ENCODE measurements at regions of chr19 and their contacts with region 1.

Region 1: DNA sequence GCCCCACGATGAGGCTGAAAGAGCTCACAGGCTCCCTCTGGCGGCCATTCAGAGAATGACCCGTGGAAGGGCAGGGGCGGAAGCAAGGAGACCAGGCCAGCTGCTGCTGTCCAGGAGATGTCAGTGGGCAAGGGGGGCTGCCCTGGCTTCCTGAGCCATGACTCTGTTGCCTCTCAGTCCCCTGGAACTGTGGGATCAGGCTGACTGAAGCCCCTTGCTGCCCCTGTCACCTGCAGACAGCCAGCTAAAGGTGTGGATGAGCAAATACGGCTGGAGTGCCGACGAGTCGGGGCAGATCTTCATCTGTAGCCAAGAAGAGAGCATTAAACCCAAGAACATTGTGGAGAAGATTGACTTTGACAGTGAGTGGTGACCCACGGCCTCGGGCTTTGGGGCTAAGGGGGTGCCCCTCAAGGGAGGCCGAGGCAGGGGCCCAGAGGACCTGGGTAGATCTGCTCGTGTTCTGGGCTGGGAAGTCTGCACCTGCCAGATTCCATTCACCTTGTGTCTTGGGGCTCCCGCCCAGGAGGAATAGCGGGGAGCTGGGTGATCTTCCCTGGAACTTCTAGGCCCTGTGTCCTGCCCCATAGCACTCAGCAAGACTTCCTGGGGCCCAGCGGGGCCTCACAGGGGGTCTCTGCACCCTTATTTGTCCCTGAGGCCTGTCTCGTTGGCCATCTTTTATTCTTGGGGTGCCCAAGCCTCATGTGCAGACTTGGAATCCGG is 12.5 kb upstream of the ACTN4 start:
- DNase-seq: no peak
- H3K4me3 ChIP-seq: no peak overlapping the region
- H3K27ac ChIP-seq: no peak overlapping the region
- H3K4me1 ChIP-seq: peaks cover 35% of the 10 kb centered on the region
- H3K27me3 ChIP-seq: no peaks in the 10 kb centered on the region
- CTCF ChIP-seq: peak; percentile 89 to 93

Region 2: DNA sequence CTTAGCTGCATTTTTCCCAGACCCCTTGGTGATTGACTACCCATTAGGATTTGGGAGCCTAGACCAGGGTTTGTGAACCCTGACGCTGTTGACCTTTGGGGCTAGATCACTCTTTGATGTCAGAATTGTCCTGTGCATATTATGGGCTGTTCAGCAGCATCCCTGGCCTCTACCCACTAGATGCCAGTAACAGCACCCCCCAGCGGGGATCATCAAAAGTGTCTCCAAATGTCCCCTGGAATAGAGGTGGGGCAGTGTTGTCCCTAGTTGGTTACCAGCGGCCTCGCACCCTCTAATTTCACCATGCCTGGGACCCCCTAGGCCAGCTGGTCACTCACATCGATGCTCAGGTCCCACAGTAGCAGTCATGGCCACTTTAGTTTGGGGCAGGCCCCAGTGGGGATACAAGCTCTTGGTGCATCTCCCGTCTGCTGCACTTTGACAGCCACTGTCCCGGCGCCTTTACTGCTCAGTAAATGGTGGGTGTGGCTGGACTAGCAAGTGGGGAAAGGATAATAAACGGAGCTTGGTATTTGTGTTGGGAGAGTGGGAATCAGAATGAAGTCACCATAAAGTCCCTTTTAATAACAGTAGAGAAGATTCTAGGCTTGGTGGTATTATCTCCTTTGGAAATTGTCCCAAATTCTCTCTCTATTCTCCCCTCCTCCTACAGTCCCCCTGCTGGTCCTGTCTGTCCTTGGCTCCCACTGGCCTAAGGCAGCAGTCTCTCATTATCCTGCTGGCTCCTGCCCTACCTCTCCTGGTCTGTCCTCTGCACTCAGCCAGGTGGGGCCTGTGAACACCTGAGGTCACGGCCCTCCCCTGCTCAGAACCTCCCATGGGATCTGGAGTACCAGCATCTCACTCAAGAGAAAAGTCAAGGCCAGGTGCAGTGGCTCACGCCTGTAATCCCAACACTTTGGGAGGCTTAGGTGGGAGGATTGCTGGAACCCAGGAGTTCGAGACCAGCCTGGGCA is 647.3 kb before region 1 on chr19:
- CTCF ChIA-PET with region 1: no interaction called
- dilution Hi-C with region 1: no loop called
- in situ Hi-C with region 1: no loop called
- intact Hi-C with region 1: no loop called
- DNase-seq: no peak
- H3K4me3 ChIP-seq: no peak overlapping the region
- H3K27ac ChIP-seq: no peak overlapping the region
- H3K4me1 ChIP-seq: peaks cover 60% of the 10 kb centered on the region
- H3K27me3 ChIP-seq: no peaks in the 10 kb centered on the region
- CTCF ChIP-seq: peak; percentile 19 to 36

Region 3: DNA sequence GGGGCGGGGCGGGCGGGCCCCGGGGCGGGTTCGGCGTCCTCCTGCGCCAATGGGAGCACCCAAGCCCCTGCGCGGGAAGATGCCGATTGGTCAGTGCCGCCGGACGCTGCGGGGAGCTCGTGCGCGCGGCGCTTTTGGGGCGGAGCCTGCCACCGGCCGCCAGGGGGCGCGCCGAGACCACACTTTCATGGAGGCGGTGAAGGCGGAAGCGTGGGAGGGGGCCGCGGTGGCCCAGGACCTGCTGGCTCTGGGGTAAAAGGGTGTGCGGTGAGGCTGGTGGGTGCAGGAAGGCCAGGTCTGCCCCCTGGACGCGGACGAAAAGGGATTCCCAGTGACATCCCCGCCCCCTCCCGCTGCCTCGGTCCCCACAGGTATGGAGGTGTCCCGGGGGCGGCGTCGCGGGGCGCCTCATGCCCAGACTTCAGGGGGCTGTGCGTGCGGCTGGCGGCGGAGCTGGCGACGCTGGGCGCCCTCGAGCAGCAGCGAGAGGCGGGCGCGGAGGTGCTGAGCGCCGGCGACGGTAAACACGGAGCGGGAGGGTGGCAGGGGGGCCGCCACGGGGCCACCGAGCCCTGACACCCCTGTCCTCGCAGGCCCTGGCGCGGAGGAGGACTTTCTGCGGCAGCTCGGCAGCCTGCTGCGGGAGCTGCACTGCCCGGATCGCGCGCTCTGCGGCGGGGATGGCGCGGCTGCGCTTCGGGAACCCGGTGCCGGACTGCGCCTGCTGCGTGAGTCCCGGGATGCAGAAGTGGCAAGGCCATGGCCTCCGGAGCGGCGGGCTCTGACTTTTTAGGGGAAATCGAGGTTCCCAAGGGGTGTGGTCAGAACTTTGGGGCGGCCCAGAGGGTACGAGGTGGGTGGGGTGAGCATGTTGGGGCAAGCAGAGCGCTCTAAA is 231.7 kb before region 1 on chr19 and contains the start of gene FAM98C:
- CTCF ChIA-PET with region 1: interaction called, 9 read pairs
- dilution Hi-C with region 1: no loop called
- in situ Hi-C with region 1: no loop called
- intact Hi-C with region 1: loop called (anchors 1 kb)
- DNase-seq: peak; percentile 94
- H3K4me3 ChIP-seq: peak within 1 kb of the TSS; percentile 58 to 94 (median 83)
- H3K27ac ChIP-seq: no peak within 1 kb of the TSS
- H3K4me1 ChIP-seq: no peaks in the 10 kb centered on the region
- H3K27me3 ChIP-seq: no peaks in the 10 kb centered on the region
- CTCF ChIP-seq: peak; percentile 76 to 93
- total RNA-seq, gene FAM98C: 10.5 to 14.9 TPM

Region 4: DNA sequence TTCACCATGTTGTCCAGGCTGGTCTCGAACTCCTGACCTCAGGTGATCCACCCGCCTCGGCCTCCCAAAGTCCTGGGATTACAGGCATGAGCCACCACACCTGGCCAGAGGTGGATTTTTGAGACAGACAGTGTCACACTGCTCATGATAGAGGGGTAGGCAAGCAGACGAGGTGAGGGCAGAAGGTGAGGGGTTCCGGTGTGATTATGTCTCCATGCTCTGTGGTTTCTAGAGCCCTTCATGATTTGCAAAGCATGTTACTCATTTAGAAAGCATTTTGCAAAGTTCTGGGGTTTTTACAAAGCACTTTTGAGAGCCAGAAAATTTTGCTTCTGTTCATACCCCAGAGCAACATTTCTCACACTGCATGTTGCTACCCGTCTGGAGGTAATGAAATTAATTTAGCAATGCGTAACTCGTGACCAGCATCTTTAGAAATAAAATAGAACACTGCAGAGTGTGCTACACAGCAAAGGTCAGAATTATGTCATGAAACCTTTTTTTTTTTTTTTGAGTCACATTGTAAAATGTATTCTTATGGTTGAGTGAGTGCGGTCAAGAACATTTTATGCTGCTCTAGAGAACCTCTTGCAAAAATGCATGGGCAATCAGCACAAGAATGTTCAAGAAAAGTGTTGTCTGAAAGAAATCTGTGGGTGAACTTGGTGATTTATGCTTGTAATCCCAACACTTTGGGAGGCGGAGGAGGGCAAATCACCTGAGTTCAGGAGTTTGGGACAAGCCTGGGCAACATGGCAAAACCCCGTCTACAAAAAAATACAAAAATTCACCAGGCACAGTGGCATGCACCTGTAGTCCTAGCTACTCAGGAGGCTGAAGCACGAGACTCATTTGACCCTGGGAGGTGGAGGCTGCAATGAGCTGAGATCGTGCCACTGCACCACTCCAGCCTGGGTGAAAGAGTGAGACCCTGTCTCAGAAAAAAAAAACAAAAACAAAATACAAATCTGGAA is 75.2 kb before region 1 on chr19:
- CTCF ChIA-PET with region 1: interaction called, 3 read pairs
- dilution Hi-C with region 1: no loop called
- in situ Hi-C with region 1: no loop called
- intact Hi-C with region 1: loop called (anchors 1 kb)
- DNase-seq: peak; percentile 99
- H3K4me3 ChIP-seq: no peak overlapping the region
- H3K27ac ChIP-seq: peak overlapping the region; percentile 48
- H3K4me1 ChIP-seq: peaks cover 19% of the 10 kb centered on the region
- H3K27me3 ChIP-seq: peaks cover under 1% of the 10 kb centered on the region
- CTCF ChIP-seq: no peak

Region 5: DNA sequence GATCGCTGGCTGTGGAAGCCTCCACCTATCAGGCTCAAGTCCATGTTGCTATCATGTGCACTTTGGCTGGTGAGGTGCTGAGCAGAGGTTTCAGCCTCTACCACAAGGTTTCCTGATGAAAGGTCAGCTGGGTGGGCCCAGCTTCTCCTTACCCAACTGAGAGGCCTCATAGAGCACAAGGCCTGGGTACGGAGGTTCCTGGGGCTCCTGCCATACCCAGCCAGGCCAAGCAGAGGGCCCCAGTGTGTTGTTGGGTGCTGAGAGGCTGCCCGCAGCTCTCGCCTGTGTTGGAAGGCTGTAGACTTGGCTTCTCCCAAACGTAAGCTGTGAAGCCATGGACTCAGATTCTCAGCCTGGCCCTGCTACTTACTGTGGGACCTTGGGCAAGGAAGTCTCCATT is 40.7 kb after region 1 on chr19:
- CTCF ChIA-PET with region 1: no interaction called
- dilution Hi-C with region 1: no loop called
- in situ Hi-C with region 1: no loop called
- intact Hi-C with region 1: loop called (anchors 1 kb)
- DNase-seq: no peak
- H3K4me3 ChIP-seq: no peak overlapping the region
- H3K27ac ChIP-seq: peak overlapping the region; percentile 99
- H3K4me1 ChIP-seq: peaks cover 74% of the 10 kb centered on the region
- H3K27me3 ChIP-seq: no peaks in the 10 kb centered on the region
- CTCF ChIP-seq: no peak

Region 6: GRCh38 chr19:38718747-38719543 is 84.0 kb after region 1 on chr19:
- CTCF ChIA-PET with region 1: interaction called, 3 read pairs
- dilution Hi-C with region 1: no loop called
- in situ Hi-C with region 1: no loop called
- intact Hi-C with region 1: loop called (anchors 2 kb)
- DNase-seq: peak; percentile 68
- H3K4me3 ChIP-seq: no peak overlapping the region
- H3K27ac ChIP-seq: peak overlapping the region; percentile 86
- H3K4me1 ChIP-seq: peaks cover 43% of the 10 kb centered on the region
- H3K27me3 ChIP-seq: no peaks in the 10 kb centered on the region
- CTCF ChIP-seq: peak; percentile 27 to 61

Region 7: DNA sequence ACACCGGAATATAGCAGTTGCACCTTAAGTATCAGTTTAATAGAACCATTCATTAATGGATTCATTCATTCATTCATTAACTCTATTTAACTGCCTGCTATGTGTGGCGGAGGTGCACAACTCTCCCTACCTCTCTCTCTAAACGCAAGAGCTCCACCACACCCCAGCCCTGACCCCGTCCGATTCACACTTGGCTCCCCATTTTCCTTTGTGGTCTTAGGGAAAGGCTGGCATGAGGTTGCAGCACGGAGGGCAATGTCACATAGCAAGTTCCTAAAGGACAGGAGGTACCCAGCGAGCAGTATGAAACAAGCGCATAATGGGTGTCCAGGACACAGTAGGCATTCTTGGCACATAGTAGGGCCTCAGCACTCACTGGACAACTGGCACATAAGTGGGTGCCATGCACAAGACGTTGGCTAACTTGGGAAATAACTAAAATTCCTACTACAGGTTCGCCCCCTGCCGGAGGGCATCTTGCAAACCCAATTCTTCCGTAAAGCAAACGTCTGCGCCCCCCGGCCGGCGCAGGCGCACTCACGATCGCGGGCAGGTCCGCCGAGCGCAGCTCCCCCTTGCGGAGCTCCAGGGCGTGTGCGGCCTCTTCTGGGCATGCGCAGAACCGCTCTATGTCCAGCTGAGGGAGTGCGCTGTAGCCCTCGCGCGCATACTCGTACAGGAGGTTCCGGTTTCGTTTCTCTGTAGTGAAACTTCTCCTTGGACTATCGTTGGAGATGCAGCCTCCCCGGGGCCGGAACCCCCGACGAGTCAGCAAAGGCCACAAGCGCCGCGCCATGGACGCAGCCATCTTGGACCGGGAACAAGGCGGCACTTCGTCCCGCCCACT is 295.2 kb after region 1 on chr19 and contains the start of gene SARS2:
- CTCF ChIA-PET with region 1: interaction called, 3 read pairs
- dilution Hi-C with region 1: no loop called
- in situ Hi-C with region 1: no loop called
- intact Hi-C with region 1: loop called (anchors 1 kb)
- DNase-seq: peak; percentile 84
- H3K4me3 ChIP-seq: peak within 1 kb of the TSS; percentile 84 to 90 (median 86)
- H3K27ac ChIP-seq: peak within 1 kb of the TSS; percentile 82
- H3K4me1 ChIP-seq: peaks cover 12% of the 10 kb centered on the region
- H3K27me3 ChIP-seq: no peaks in the 10 kb centered on the region
- CTCF ChIP-seq: peak; percentile 88 to 96
- total RNA-seq, gene SARS2: 18.0 to 28.0 TPM